H1 (cell line): ENCODE measurements at regions of chr20 and their contacts with region 1.

Region 1: DNA sequence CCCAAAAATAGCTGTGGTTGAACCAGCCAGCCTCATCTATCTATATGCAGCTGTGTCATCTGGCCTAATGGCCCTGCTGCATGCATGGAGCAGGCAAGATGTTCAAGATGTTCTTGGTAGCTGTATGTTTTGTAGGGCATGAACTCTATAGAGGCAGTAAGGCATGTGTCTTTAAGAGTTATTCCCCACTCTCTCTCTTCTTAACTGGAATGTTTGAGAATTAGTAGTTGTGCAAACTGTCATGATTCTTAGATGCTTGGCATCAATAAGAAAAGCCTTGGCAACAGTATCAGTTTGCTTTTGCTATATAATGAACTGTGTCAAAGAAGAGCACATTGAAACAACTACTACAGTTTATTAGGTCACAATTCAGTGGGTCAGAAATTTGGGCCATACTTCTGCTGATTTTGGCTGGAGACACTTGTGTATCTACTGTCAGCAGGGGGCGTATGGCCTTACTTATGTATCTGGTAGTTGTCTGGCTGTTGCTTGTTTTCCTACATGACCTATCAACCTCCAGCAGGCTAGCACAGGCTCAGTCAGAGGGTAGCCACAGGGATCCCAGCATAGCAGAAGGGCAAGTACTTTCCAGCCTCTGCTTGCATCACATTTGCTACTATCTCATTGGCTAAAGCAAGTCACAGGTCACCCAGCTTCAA is 56.1 kb upstream of the LAMP5 start:
- DNase-seq: peak in 1 of 2 experiments; percentile 53
- H3K4me3 ChIP-seq: no peak overlapping the region
- H3K27ac ChIP-seq: no peak overlapping the region
- H3K4me1 ChIP-seq: no peaks in the 10 kb centered on the region
- H3K27me3 ChIP-seq: no peaks in the 10 kb centered on the region
- CTCF ChIP-seq: peak in 2 of 3 experiments; percentile 53 to 62; a peak in 3 of 4 replicates
- EP300 ChIP-seq: no peak
- POLR2A ChIP-seq: no peak
- RAD21 ChIP-seq: peak; percentile 54 to 56; a peak in 3 of 4 replicates

Region 2: DNA sequence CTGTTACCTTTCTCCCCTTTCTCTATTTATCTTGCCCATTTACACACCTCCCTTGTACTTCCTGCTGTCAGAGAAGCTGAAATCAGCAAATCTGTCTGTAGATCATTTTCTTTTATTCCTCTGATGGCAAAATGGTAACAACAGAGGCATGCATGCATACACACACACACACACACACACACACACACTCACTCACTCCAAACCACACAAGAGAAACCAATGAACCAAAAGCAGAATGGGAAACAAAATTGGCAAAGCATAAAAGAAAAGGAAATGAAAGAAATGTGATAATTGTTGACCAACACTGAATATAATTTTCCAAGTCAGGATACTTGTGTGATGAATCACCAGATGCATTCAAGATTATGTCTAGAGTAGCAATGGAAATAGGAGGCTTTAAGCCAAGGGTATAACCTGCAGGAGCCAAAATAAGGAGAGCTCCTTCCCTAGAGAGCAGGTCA is 217.0 kb before region 1 on chr20:
- CTCF ChIA-PET with region 1: no interaction called
- POLR2A ChIA-PET with region 1: no interaction called
- DNase-seq: no peak
- H3K4me3 ChIP-seq: no peak overlapping the region
- H3K27ac ChIP-seq: no peak overlapping the region
- H3K4me1 ChIP-seq: no peaks in the 10 kb centered on the region
- H3K27me3 ChIP-seq: no peaks in the 10 kb centered on the region
- CTCF ChIP-seq: no peak
- EP300 ChIP-seq: no peak
- POLR2A ChIP-seq: no peak
- RAD21 ChIP-seq: no peak

Region 3: GRCh38 chr20:9332783-9333479 is 125.3 kb before region 1 on chr20:
- CTCF ChIA-PET with region 1: no interaction called
- POLR2A ChIA-PET with region 1: no interaction called
- DNase-seq: no peak
- H3K4me3 ChIP-seq: no peak overlapping the region
- H3K27ac ChIP-seq: no peak overlapping the region
- H3K4me1 ChIP-seq: peaks cover 0 to 9% (median 6%) of the 10 kb centered on the region in 4 experiments; a peak in 5 of 7 replicates
- H3K27me3 ChIP-seq: no peaks in the 10 kb centered on the region
- CTCF ChIP-seq: no peak
- EP300 ChIP-seq: no peak
- POLR2A ChIP-seq: no peak
- RAD21 ChIP-seq: no peak

Region 4: DNA sequence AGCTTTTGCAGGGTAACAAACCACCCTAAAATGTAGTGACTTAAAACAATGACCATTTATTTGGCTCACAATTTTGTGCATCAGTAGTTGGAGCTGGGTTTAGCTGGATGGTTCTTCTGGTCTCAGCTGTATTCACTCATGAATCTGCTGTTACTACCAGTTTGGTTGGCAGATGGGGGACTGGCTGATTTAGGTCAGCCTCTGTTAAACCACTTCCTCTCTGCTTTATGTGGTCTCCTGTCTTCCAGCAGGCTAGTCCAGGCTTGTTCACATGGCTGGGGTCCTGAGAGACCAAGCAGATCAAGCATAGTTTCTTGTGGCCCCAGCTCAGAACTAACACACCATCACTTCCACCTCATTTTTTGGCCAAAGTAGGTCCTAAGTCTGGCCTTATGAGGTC is 11.1 kb before region 1 on chr20:
- CTCF ChIA-PET with region 1: interaction called, 48 read pairs
- POLR2A ChIA-PET with region 1: interaction called, 3 read pairs
- DNase-seq: no peak
- H3K4me3 ChIP-seq: no peak overlapping the region
- H3K27ac ChIP-seq: no peak overlapping the region
- H3K4me1 ChIP-seq: no peaks in the 10 kb centered on the region
- H3K27me3 ChIP-seq: no peaks in the 10 kb centered on the region
- CTCF ChIP-seq: no peak
- EP300 ChIP-seq: no peak
- POLR2A ChIP-seq: no peak
- RAD21 ChIP-seq: no peak

Region 5: DNA sequence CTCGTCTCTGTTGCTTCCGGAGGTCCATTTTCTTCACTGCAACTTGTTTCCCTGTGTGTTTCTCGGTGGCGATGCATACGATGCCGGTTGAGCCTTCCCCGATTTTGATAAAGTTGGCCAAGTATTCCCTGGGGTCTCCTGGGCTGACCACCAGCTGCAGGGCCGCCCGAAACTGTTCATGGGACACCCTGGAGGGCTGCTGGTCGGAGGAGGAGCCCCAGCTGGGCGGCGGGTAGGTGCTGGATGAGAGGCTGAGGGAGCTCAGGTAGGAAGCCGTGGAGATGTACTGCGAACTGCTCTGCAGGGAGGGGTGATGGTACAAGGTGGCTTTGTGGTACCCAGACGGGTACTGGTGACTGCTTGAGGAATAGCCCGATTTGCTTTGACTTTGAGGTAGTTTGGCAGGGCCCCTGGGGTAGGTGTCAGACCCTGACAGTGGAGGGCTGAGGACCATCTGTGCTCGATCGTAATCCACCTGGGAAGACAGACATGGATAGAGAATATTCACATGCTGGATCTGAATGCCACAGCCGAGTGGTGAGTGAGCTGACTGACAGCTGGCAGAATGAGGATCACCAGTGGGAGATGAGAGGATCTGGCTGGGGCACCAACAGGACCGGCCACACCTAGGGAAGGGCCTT is 107.8 kb after region 1 on chr20:
- CTCF ChIA-PET with region 1: no interaction called
- POLR2A ChIA-PET with region 1: no interaction called
- DNase-seq: no peak
- H3K4me3 ChIP-seq: no peak overlapping the region
- H3K27ac ChIP-seq: no peak overlapping the region
- H3K4me1 ChIP-seq: peaks cover 0 to 7% (median 2%) of the 10 kb centered on the region in 4 experiments; a peak in 5 of 7 replicates
- H3K27me3 ChIP-seq: peaks cover 0 to 4% (median 2%) of the 10 kb centered on the region in 4 experiments; a peak in 4 of 7 replicates
- CTCF ChIP-seq: no peak
- EP300 ChIP-seq: no peak
- POLR2A ChIP-seq: no peak
- RAD21 ChIP-seq: no peak